ENCODE measurements at regions of chr19 and their contacts with region 1.

Region 1: GRCh38 chr19:55301459-55302317 is 17.9 kb downstream of the BRSK1 start:
- DNase-seq: peak; percentile 73 to 100
- H3K4me3 ChIP-seq: peak overlapping the region in 2 of 4 experiments; percentile 23 to 39; a peak in 4 of 8 replicates
- H3K27ac ChIP-seq: no peak overlapping the region
- H3K4me1 ChIP-seq: peaks cover 0 to 8% (median 3%) of the 10 kb centered on the region in 4 experiments; a peak in 3 of 7 replicates
- H3K27me3 ChIP-seq: no peaks in the 10 kb centered on the region
- CTCF ChIP-seq: peak; percentile 89 to 95 (median 94)
- EP300 ChIP-seq: no peak
- POLR2A ChIP-seq: no peak
- RAD21 ChIP-seq: peak; percentile 71 to 74

Region 2: DNA sequence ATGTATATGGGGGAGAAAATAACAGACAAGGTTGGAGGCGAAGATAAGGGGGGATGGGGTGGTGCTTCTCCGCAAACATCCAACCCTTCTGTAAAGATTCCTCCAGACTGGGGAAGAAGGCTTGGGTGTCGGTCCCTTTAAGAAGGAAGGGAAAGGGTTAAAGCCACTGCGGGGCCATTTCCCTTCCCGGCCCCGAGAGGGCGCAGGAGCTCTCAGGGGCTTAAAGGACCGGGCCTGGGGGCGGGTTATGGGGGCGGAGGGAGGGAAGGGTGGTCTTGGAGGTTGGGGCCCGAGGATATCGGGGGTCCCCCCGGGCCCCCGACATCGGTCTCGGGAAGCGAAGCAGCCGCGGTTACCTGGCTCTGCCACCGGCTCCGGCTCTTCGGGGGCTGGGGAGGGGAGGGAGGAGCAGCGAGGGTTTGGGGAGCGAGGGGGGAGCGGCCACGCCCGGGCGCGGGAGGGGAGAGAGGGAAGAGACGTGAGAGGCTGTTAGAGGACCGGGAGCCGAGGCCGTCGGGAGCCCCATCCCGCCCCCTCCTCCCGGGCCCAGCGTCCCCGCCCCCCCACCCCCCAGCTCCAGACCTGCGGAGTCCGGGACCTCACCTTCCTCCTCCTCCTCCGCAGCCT is 155.5 kb before region 1 on chr19:
- CTCF ChIA-PET with region 1: interaction called, 14 read pairs
- POLR2A ChIA-PET with region 1: no interaction called
- DNase-seq: peak in 1 of 2 experiments; percentile 80
- H3K4me3 ChIP-seq: peak overlapping the region; percentile 53 to 83 (median 60)
- H3K27ac ChIP-seq: no peak overlapping the region
- H3K4me1 ChIP-seq: peaks cover 6 to 24% (median 13%) of the 10 kb centered on the region in 4 experiments
- H3K27me3 ChIP-seq: no peaks in the 10 kb centered on the region
- CTCF ChIP-seq: peak; percentile 63 to 80 (median 73)
- EP300 ChIP-seq: peak in 1 of 2 experiments; percentile 36; a peak in 1 of 3 replicates
- POLR2A ChIP-seq: no peak; a peak in 1 of 3 replicates
- RAD21 ChIP-seq: peak; percentile 22 to 45; a peak in 3 of 4 replicates

Region 3: GRCh38 chr19:55232296-55232622 is 69.4 kb before region 1 on chr19:
- CTCF ChIA-PET with region 1: no interaction called
- POLR2A ChIA-PET with region 1: no interaction called
- DNase-seq: no peak
- H3K4me3 ChIP-seq: no peak overlapping the region
- H3K27ac ChIP-seq: no peak overlapping the region
- H3K4me1 ChIP-seq: no peaks in the 10 kb centered on the region
- H3K27me3 ChIP-seq: no peaks in the 10 kb centered on the region
- CTCF ChIP-seq: no peak
- EP300 ChIP-seq: no peak
- POLR2A ChIP-seq: no peak
- RAD21 ChIP-seq: no peak

Region 4: DNA sequence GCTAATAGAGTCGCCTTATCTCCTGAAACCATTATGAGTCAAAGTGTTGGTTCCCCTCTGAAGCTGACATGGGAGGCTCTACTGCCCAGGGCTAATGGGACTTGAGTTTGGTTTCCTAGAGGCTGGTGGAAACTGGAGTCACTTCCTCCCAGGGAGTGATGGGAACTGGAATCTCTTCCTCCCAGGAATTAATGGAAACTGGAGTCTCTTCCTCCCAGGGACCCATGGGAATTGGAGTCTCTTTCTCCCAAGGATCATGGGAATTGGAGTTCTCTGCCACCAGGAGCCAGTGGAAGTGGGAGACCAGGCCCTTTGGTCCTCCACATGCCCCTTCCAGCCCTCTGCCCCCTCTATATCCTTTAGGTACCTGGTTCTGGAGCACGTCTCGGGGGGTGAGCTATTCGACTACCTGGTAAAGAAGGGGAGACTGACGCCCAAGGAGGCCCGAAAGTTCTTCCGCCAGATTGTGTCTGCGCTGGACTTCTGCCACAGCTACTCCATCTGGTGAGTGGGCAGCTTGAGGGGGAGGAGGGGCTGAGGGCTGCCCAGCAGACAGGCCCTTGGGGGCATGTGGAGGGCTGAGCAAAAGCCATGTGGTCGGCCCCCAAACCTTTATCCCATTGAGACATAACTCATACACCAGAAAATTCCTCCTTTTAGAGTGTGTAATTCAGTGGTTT is 12.4 kb before region 1 on chr19:
- CTCF ChIA-PET with region 1: interaction called, 21 read pairs
- POLR2A ChIA-PET with region 1: interaction called, 8 read pairs
- DNase-seq: no peak
- H3K4me3 ChIP-seq: no peak overlapping the region
- H3K27ac ChIP-seq: no peak overlapping the region
- H3K4me1 ChIP-seq: peaks cover 0 to 4% (median 0%) of the 10 kb centered on the region in 4 experiments; a peak in 1 of 7 replicates
- H3K27me3 ChIP-seq: no peaks in the 10 kb centered on the region
- CTCF ChIP-seq: no peak
- EP300 ChIP-seq: no peak
- POLR2A ChIP-seq: no peak
- RAD21 ChIP-seq: no peak

Region 5: DNA sequence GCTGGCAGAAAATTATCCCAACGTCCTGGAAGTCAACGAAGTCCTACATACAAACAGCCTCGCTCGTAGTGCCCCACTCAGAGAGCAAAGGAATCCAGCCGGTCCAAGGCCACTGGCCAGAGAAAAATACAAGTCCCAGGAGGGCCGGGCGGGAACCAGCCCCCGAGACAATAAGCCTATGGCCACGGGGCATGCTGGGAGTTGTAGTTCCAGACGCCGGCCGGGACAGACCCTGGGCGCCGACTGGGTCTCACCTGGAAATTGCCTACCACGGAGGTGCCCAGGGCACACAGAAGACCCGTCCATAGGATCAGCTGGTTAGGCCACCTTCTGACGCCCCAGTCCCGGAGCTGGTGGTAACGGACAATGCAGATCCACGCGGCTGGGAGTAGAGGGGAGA is 18.1 kb after region 1 on chr19:
- CTCF ChIA-PET with region 1: interaction called, 33 read pairs
- POLR2A ChIA-PET with region 1: interaction called, 6 read pairs
- DNase-seq: peak; percentile 61 to 93
- H3K4me3 ChIP-seq: peak overlapping the region; percentile 24 to 56 (median 37); a peak in 7 of 8 replicates
- H3K27ac ChIP-seq: no peak overlapping the region
- H3K4me1 ChIP-seq: peaks cover 0 to 10% (median 5%) of the 10 kb centered on the region in 4 experiments; a peak in 6 of 7 replicates
- H3K27me3 ChIP-seq: no peaks in the 10 kb centered on the region
- CTCF ChIP-seq: no peak
- EP300 ChIP-seq: no peak
- POLR2A ChIP-seq: no peak; a peak in 1 of 3 replicates
- RAD21 ChIP-seq: no peak

Region 6: DNA sequence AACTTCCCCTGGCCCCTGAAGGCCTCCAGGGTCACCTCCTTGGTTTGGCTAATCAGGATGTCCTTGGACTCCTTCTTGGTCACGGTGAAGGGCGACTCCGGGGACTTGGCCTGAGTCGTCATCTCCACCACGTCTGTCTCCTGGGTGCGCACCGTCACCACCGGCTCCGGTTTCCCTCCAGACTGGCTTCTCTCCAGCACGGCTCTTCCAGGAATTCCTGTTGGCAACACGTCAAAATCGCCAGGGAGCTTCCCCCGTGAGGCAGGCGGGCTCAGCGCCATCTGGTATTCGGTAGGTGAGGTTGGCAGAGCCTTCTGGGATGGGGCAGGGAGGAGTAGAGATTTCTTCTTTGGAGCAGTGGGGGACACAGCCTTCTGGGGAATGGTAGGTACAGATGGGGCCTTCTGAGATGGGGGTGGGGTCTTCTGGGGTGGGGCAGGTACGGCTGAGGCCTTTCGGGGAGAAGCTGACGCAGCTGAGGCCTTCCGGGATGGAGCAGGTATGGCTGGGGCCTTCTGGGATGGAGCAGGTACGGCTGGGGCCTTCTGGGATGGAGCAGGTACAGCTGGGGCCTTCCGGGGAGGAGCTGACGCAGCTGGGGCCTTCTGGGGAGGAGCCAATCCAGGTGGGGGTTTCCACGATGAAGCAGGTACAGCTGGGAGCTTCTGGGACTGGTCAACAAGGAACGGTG is 57.4 kb after region 1 on chr19:
- CTCF ChIA-PET with region 1: interaction called, 11 read pairs
- POLR2A ChIA-PET with region 1: interaction called, 3 read pairs
- DNase-seq: no peak
- H3K4me3 ChIP-seq: no peak overlapping the region
- H3K27ac ChIP-seq: no peak overlapping the region
- H3K4me1 ChIP-seq: peaks cover 0 to 10% (median 7%) of the 10 kb centered on the region in 4 experiments; a peak in 6 of 7 replicates
- H3K27me3 ChIP-seq: peaks cover 2 to 31% (median 26%) of the 10 kb centered on the region in 4 experiments
- CTCF ChIP-seq: no peak
- EP300 ChIP-seq: no peak
- POLR2A ChIP-seq: no peak
- RAD21 ChIP-seq: no peak

Region 7: DNA sequence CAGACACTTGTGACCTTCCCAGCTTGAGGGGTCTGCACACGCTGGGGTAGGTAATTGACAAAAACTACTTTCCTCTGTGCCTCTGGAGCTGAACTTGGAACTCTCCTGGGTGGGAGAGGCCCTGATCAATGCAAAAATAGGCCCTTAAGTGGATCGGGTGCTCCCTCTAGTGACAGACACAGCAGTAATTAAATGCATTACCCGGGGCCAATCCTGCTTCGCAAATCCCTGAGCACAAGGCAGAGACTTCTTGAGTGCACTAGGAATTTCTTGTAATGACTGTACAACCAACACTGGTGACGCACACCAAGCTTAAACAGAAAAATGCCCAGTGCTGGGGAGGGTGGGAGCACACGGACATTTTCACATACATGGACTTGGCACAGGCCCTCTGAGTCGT is 116.5 kb after region 1 on chr19:
- CTCF ChIA-PET with region 1: interaction called, 12 read pairs
- POLR2A ChIA-PET with region 1: no interaction called
- DNase-seq: peak; percentile 41 to 71
- H3K4me3 ChIP-seq: no peak overlapping the region
- H3K27ac ChIP-seq: no peak overlapping the region
- H3K4me1 ChIP-seq: peaks cover 0 to 2% (median 0%) of the 10 kb centered on the region in 4 experiments; a peak in 1 of 7 replicates
- H3K27me3 ChIP-seq: peaks cover 0 to 9% (median 2%) of the 10 kb centered on the region in 4 experiments; a peak in 2 of 7 replicates
- CTCF ChIP-seq: peak; percentile 45 to 85 (median 72)
- EP300 ChIP-seq: no peak
- POLR2A ChIP-seq: no peak
- RAD21 ChIP-seq: peak; percentile 93 to 97